Esophagus muscularis mucosa (tissue), 4 donors: ENCODE measurements at regions of chr12 and their contacts with region 1.

Region 1: GRCh38 chr12:14167005-14167628 is 185.7 kb upstream of the GRIN2B start:
- DNase-seq: no peak
- H3K4me3 ChIP-seq: no peak overlapping the region
- H3K27ac ChIP-seq: no peak overlapping the region
- H3K4me1 ChIP-seq: no peaks in the 10 kb centered on the region
- H3K27me3 ChIP-seq: peaks cover 0 to 7% (median 0%) of the 10 kb centered on the region in 4 donors
- CTCF ChIP-seq: peak; percentile 79 to 91 (median 87)
- EP300 ChIP-seq: no peak
- POLR2A ChIP-seq: no peak

Region 2: GRCh38 chr12:13734584-13735152 is 432.4 kb before region 1 on chr12:
- intact Hi-C with region 1: loop called (anchors 10 kb)
- DNase-seq: no peak
- H3K4me3 ChIP-seq: no peak overlapping the region
- H3K27ac ChIP-seq: no peak overlapping the region
- H3K4me1 ChIP-seq: peaks cover 0 to under 1% (median 0%) of the 10 kb centered on the region in 4 donors
- H3K27me3 ChIP-seq: no peaks in the 10 kb centered on the region
- CTCF ChIP-seq: no peak
- EP300 ChIP-seq: no peak
- POLR2A ChIP-seq: no peak

Region 3: GRCh38 chr12:13864081-13864673 is 302.9 kb before region 1 on chr12:
- intact Hi-C with region 1: loop called (anchors 5 kb)
- DNase-seq: no peak
- H3K4me3 ChIP-seq: no peak overlapping the region
- H3K27ac ChIP-seq: no peak overlapping the region
- H3K4me1 ChIP-seq: no peaks in the 10 kb centered on the region
- H3K27me3 ChIP-seq: peaks cover 0 to 5% (median 0%) of the 10 kb centered on the region in 4 donors
- CTCF ChIP-seq: peak; percentile 58 to 85 (median 76)
- EP300 ChIP-seq: no peak
- POLR2A ChIP-seq: no peak